ENCODE measurements at regions of chr12 and their contacts with region 1.

Region 1: GRCh38 chr12:47889040-47889439 is 15.8 kb downstream of the VDR start:
- DNase-seq: peak; percentile 80
- ATAC-seq: peak; percentile 86
- H3K4me3 Mint-ChIP-seq: peak overlapping the region; percentile 76
- H3K27ac Mint-ChIP-seq: peak overlapping the region; percentile 97
- H3K4me1 Mint-ChIP-seq: peaks cover 91% of the 10 kb centered on the region
- H3K27me3 Mint-ChIP-seq: no peaks in the 10 kb centered on the region

Region 2: DNA sequence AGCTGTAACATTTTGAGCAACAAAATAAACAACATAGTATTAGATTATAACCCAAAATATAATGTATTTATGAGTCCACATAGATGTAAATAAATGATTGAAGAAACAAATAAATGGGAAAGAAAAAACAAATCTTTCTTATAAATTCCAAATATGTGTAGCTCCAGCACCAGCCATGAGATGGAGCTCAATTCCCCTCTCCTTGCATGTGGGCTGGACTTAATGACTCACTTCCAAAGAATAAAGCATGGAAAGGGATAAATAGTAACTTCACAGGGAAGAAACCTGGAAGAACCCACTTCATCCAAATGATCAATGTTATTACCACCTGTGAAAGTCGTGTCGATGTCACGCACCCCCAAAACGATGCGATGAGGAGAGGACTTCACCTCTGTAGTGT is 342.0 kb before region 1 on chr12:
- CTCF ChIA-PET with region 1: no interaction called
- DNase-seq: no peak
- ATAC-seq: no peak
- H3K4me3 Mint-ChIP-seq: no peak overlapping the region
- H3K27ac Mint-ChIP-seq: no peak overlapping the region
- H3K4me1 Mint-ChIP-seq: peaks cover 1% of the 10 kb centered on the region
- H3K27me3 Mint-ChIP-seq: peaks cover 2% of the 10 kb centered on the region

Region 3: DNA sequence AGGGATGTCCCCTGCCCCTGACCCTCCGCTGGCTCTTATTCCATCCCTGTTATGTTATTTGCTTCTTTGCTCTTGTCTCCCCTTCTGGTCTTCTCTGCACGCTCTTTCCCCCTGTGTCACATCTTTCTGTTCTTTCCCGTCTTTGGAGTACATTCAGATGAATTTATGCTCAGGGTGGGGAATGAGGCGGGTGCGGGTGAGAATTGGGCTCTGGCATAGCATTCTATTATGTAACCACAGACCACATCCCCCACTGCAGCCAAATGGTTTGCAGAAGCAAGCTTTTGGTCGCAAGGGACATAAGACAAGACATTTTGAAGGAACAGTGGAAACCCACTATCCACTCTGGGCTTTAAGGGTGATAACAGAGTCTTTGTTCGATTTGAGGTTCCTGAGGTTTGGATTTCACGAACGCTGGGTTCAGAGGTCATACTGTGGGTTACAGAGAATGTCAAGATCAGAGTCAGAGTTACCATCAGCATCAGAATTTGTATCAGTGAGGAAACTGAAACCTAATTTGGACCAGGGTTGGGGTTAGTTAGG is 167.5 kb before region 1 on chr12:
- CTCF ChIA-PET with region 1: no interaction called
- DNase-seq: peak; percentile 80
- ATAC-seq: peak; percentile 70
- H3K4me3 Mint-ChIP-seq: peak overlapping the region; percentile 26
- H3K27ac Mint-ChIP-seq: peak overlapping the region; percentile 95
- H3K4me1 Mint-ChIP-seq: peaks cover 55% of the 10 kb centered on the region
- H3K27me3 Mint-ChIP-seq: no peaks in the 10 kb centered on the region

Region 4: DNA sequence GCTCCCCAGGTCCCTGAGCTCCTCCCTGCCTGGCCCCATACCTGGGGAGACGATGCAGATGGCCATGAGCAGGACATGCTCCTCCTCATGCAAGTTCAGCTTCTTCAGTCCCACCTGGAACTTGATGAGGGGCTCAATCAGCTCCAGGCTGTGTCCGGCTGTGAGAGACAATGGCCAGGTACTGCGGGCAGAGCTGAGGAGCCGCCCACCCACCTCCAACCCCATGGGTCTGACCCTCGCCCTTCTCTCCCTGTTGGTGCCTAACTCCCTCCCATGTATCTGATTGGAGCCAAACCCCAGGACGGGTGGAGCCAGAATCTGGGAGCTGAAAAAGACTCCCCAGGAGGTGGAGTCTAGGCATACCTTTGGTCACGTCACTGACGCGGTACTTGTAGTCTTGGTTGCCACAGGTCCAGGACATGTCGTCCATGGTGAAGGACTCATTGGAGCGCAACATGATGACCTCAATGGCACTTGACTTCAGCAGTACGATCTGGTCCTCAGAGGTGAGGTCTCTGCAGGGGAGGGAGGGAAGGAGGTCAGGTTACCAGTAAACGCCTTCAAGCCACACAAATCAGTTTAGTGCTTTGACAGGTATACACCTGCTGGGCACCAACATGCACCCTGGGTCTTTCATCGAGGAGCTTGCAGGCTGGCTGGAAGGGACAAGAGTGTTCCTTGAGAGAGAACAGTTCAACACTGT is 42.6 kb before region 1 on chr12:
- CTCF ChIA-PET with region 1: no interaction called
- DNase-seq: no peak
- ATAC-seq: no peak
- H3K4me3 Mint-ChIP-seq: no peak overlapping the region
- H3K27ac Mint-ChIP-seq: no peak overlapping the region
- H3K4me1 Mint-ChIP-seq: no peaks in the 10 kb centered on the region
- H3K27me3 Mint-ChIP-seq: no peaks in the 10 kb centered on the region

Region 5: GRCh38 chr12:47870175-47870781 is 18.8 kb before region 1 on chr12:
- CTCF ChIA-PET with region 1: interaction called, 34 read pairs
- DNase-seq: no peak
- ATAC-seq: no peak
- H3K4me3 Mint-ChIP-seq: no peak overlapping the region
- H3K27ac Mint-ChIP-seq: peak overlapping the region; percentile 73
- H3K4me1 Mint-ChIP-seq: peaks cover 69% of the 10 kb centered on the region
- H3K27me3 Mint-ChIP-seq: no peaks in the 10 kb centered on the region

Region 6: GRCh38 chr12:47949441-47950308 is 60.6 kb after region 1 on chr12:
- CTCF ChIA-PET with region 1: interaction called, 13 read pairs
- DNase-seq: peak; percentile 60
- ATAC-seq: peak; percentile 76
- H3K4me3 Mint-ChIP-seq: no peak overlapping the region
- H3K27ac Mint-ChIP-seq: no peak overlapping the region
- H3K4me1 Mint-ChIP-seq: peaks cover 14% of the 10 kb centered on the region
- H3K27me3 Mint-ChIP-seq: peaks cover 8% of the 10 kb centered on the region